K562 (cell line): ENCODE measurements at regions of chr9 and their contacts with region 1.

Region 1: GRCh38 chr9:109440797-109441287 is 57.3 kb downstream of the PTPN3 start:
- DNase-seq: peak; percentile 67 to 78 (median 74)
- ATAC-seq: peak; percentile 99
- H3K4me3 ChIP-seq: no peak overlapping the region
- H3K27ac ChIP-seq: no peak overlapping the region
- H3K4me1 ChIP-seq: peaks cover 0 to 3% of the 10 kb centered on the region in 2 experiments; a peak in 2 of 5 replicates
- H3K27me3 ChIP-seq: peaks cover 0 to 26% of the 10 kb centered on the region in 2 experiments; a peak in 2 of 5 replicates
- CTCF ChIP-seq: peak; percentile 75 to 90 (median 85)
- EP300 ChIP-seq: no peak; the same call in 1 of the 2 replicates
- POLR2A ChIP-seq: no peak
- RAD21 ChIP-seq: peak; percentile 53 to 72

Region 2: DNA sequence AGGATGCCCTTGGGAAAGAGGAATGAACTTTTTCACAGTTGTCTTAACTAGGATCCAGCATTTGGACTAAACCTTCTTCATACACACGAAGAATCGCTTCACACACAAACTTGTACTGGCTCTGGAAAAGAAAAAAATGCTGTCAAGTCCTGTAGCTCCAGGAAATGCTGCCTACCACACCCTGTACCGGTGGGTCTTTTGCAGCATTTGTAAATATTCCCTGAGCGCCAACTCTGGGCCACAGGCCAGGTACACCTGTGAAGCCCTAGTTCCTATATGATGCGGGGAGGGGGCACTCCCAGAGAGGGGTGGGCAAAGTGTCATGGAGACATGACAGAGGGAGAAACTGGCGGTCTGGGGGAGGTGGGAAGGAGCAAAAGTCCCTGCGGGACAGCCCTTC is 61.3 kb before region 1 on chr9:
- CTCF ChIA-PET with region 1: no interaction called
- POLR2A ChIA-PET with region 1: no interaction called
- in situ Hi-C with region 1: no loop called
- intact Hi-C with region 1: loop called (anchors 10 kb)
- DNase-seq: no peak
- ATAC-seq: no peak
- H3K4me3 ChIP-seq: no peak overlapping the region
- H3K27ac ChIP-seq: no peak overlapping the region
- H3K4me1 ChIP-seq: no peaks in the 10 kb centered on the region
- H3K27me3 ChIP-seq: peaks cover 33 to 55% of the 10 kb centered on the region in 2 experiments
- CTCF ChIP-seq: no peak
- EP300 ChIP-seq: no peak
- POLR2A ChIP-seq: no peak
- RAD21 ChIP-seq: no peak

Region 3: GRCh38 chr9:109469646-109470358 is 29.0 kb after region 1 on chr9:
- CTCF ChIA-PET with region 1: interaction called, 7 read pairs
- POLR2A ChIA-PET with region 1: no interaction called
- in situ Hi-C with region 1: no loop called
- intact Hi-C with region 1: loop called (anchors 1 kb)
- DNase-seq: peak; percentile 52 to 64 (median 56)
- ATAC-seq: peak; percentile 96
- H3K4me3 ChIP-seq: no peak overlapping the region
- H3K27ac ChIP-seq: no peak overlapping the region
- H3K4me1 ChIP-seq: no peaks in the 10 kb centered on the region
- H3K27me3 ChIP-seq: peaks cover 6 to 27% of the 10 kb centered on the region in 2 experiments; a peak in 4 of 5 replicates
- CTCF ChIP-seq: peak; percentile 74 to 87 (median 80)
- EP300 ChIP-seq: no peak
- POLR2A ChIP-seq: no peak
- RAD21 ChIP-seq: peak; percentile 67 to 78

Region 4: DNA sequence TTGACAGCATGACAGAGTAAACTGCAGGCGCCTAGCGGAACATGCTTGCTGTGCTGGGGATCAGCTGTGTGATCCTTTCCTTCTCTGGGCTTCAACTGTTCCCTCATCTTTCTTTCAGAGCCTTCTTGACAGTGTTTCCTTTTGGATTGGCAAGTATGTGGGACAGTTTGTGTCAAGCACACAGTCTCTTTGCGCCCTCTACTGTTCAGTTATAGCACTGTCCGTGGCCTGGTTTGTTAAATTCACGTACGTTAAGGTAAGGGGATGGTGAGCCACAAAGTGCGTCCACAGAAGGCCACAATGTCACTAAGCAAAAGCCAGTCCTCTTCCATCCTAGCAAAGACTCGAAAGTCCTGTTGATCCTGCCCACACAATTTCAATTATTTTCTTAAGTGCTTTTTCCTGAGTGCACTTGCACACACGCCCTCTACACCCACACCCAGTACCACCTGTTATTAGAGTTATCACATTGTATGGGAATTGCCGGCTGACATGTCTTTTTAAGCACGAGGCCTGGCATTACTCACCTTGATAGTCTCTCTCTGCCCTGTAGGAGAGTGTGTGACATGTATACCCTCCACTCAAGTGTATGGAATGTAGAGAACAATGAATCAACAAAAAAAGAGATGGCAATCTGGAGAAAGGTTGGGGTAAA is 79.8 kb after region 1 on chr9:
- CTCF ChIA-PET with region 1: interaction called, 7 read pairs
- POLR2A ChIA-PET with region 1: no interaction called
- in situ Hi-C with region 1: no loop called
- intact Hi-C with region 1: loop called (anchors 1 kb)
- DNase-seq: peak; percentile 64 to 73 (median 71)
- ATAC-seq: peak; percentile 98
- H3K4me3 ChIP-seq: no peak overlapping the region
- H3K27ac ChIP-seq: no peak overlapping the region
- H3K4me1 ChIP-seq: no peaks in the 10 kb centered on the region
- H3K27me3 ChIP-seq: no peaks in the 10 kb centered on the region; a peak in 1 of 5 replicates
- CTCF ChIP-seq: peak; percentile 78 to 86 (median 84)
- EP300 ChIP-seq: no peak
- POLR2A ChIP-seq: no peak
- RAD21 ChIP-seq: peak; percentile 64 to 81

Region 5: GRCh38 chr9:109817846-109818472 is 377.1 kb after region 1 on chr9:
- CTCF ChIA-PET with region 1: interaction called, 3 read pairs
- POLR2A ChIA-PET with region 1: no interaction called
- in situ Hi-C with region 1: no loop called
- intact Hi-C with region 1: loop called (anchors 5 kb)
- DNase-seq: peak; percentile 65 to 82 (median 74)
- ATAC-seq: peak; percentile 94
- H3K4me3 ChIP-seq: no peak overlapping the region
- H3K27ac ChIP-seq: no peak overlapping the region
- H3K4me1 ChIP-seq: no peaks in the 10 kb centered on the region
- H3K27me3 ChIP-seq: no peaks in the 10 kb centered on the region
- CTCF ChIP-seq: peak; percentile 70 to 88 (median 81)
- EP300 ChIP-seq: no peak
- POLR2A ChIP-seq: no peak
- RAD21 ChIP-seq: peak; percentile 36 to 63